ENCODE measurements at regions of chr18 and their contacts with region 1.

Region 1: DNA sequence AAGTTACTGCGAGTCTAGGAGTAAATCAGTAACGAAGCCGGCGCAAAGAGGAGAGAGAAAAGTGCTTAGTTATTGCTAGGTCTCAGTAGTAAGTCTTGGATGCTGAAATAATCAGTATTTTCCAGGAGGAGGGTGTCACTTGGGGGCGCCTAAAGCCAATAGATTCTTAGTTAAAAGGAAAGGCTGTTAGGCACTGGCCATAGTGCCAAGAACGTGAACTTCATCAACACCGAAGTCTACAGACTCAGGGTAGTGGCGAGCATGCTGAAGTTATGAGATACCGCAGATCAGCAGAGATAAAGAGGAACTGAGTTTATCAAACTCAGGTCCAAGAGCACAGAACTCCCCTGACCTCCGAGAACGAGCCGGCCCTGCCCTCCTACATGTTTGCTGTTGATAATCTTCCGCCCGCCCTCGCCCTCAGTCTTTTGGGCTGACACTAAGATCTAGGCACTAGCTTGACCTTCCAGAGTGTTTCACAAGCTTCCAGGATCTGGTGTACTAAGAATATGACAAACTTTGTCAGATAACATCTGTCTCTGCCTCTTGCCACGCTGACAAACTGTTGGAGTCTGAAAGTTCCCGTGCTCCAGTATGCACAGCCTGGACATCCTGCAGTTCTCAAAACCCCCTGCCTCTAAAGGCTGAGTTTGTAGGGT is 49.2 kb downstream of the CYB5A start:
- DNase-seq: peak; percentile 65
- ATAC-seq: peak; percentile 84
- H3K4me3 ChIP-seq: peak overlapping the region; percentile 26 to 60 (median 37)
- H3K27ac ChIP-seq: peak overlapping the region; percentile 78
- H3K4me1 ChIP-seq: peaks cover 47% of the 10 kb centered on the region
- H3K27me3 ChIP-seq: no peaks in the 10 kb centered on the region
- CTCF ChIP-seq: peak; percentile 78
- EP300 ChIP-seq: peak in 1 of 2 experiments; percentile 4; a peak in 1 of 4 replicates
- POLR2A ChIP-seq: peak; percentile 23 to 31; a peak in 2 of 4 replicates
- RAD21 ChIP-seq: 0 out of 2 replicates have a peak, but pooled peaks have one; percentile 21

Region 2: GRCh38 chr18:73879766-73880165 is 362.8 kb before region 1 on chr18:
- CTCF ChIA-PET with region 1: no interaction called
- POLR2A ChIA-PET with region 1: no interaction called
- in situ Hi-C with region 1: no loop called
- intact Hi-C with region 1: no loop called
- DNase-seq: no peak
- ATAC-seq: no peak
- H3K4me3 ChIP-seq: no peak overlapping the region
- H3K27ac ChIP-seq: no peak overlapping the region
- H3K4me1 ChIP-seq: no peaks in the 10 kb centered on the region
- H3K27me3 ChIP-seq: no peaks in the 10 kb centered on the region
- CTCF ChIP-seq: no peak
- EP300 ChIP-seq: no peak
- POLR2A ChIP-seq: no peak
- RAD21 ChIP-seq: no peak

Region 3: GRCh38 chr18:74331404-74331803 is 88.8 kb after region 1 on chr18:
- CTCF ChIA-PET with region 1: no interaction called
- POLR2A ChIA-PET with region 1: no interaction called
- in situ Hi-C with region 1: no loop called
- intact Hi-C with region 1: loop called (anchors 1 kb)
- DNase-seq: peak; percentile 43
- ATAC-seq: peak; percentile 87
- H3K4me3 ChIP-seq: no peak overlapping the region
- H3K27ac ChIP-seq: no peak overlapping the region
- H3K4me1 ChIP-seq: peaks cover 13% of the 10 kb centered on the region
- H3K27me3 ChIP-seq: no peaks in the 10 kb centered on the region
- CTCF ChIP-seq: peak; percentile 79
- EP300 ChIP-seq: no peak
- POLR2A ChIP-seq: no peak
- RAD21 ChIP-seq: peak; percentile 48; the same call in 1 of the 2 replicates